PC-9 (cell line): ENCODE measurements at regions of chr17 and their contacts with region 1.

Region 1: DNA sequence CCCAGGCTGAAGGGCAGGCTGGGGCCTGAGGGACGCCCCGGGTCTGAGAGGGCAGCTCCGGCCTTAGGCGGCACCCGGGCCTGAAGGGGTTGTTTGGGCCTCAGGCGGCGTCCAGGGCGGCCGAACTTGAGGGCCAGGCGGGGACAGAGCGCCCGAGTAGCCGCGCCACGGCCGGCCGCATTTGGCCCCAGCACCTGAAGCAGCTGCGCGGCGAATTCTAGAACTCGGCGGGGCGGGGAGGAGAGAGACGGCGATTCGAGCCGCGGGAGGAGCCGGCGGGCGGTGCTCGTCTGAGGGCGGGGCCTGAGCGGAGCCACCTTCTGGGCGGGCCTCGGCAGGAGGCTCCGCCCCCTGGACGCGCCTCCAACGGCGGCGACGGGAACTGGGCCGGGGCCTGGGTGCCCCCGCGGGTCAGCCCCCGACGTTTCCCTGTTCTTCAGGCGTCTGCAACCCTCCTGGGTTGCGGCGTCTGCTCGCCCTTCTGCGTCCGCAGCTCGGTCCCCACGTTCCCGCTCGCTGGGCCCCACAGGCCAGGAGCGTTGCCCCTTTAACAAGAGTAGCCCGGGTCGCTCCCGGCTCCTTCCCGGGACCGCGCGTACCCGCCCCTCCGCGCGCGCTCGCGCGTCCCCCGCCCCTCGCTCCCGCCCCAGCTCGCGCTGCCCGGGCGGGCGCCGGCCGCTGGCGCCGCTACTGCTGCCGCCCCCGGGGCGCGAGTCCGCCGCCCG is at the starts of genes INCA1 and KIF1C:
- DNase-seq: peak; percentile 74 to 97
- H3K4me3 ChIP-seq: peak within 1 kb of the TSS; percentile 76
- H3K27ac ChIP-seq: no peak within 1 kb of the TSS
- H3K4me1 ChIP-seq: peaks cover 17% of the 10 kb centered on the region
- H3K27me3 ChIP-seq: no peaks in the 10 kb centered on the region
- CTCF ChIP-seq: no peak
- total RNA-seq, gene INCA1: 2.9 and 3.7 TPM in 2 replicates
- total RNA-seq, gene KIF1C: 215 and 217 TPM in 2 replicates

Region 2: DNA sequence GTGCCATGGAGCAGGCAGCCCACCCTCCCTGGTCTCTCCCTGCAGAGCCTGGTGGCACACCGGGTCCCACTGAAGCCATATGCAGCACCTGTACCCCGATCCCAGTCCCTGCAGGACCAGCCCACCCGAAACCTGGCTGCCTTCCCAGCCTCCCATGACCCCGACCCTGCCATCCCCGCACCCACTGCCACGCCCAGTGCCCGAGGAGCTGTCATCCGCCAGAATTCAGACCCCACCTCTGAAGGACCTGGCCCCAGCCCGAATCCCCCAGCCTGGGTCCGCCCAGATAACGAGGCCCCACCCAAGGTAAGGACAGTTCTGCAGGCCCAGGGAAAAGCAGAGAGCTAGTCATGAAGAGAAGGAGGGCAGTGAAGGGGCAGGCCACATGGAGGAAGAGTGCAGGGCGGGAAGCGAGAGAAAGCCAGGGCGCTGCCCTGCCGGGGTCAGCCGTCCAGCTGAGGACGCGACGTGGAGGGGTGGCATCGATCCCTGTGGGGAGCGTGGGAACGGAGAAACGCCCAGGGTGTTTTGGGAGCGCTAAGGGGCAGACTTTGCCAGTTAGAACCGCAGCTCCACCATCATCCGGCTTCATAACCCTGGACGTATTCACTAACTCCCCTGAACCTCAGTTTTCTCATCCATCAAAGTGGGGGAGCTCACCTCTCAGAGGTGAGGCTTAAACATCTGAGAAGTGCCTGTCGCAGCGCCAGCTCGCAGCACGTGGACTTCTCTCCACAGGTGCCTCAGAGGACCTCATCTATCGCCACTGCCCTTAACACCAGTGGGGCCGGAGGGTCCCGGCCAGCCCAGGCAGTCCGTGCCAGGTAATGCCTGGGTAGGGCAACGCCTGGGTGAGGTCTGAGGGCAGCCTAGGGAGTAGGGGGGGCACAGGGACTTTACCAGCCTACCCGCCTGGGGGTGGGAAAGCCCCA is 105.8 kb before region 1 on chr17:
- CTCF ChIA-PET with region 1: no interaction called
- POLR2A ChIA-PET with region 1: no interaction called
- intact Hi-C with region 1: no loop called
- DNase-seq: no peak
- H3K4me3 ChIP-seq: no peak overlapping the region
- H3K27ac ChIP-seq: no peak overlapping the region
- H3K4me1 ChIP-seq: no peaks in the 10 kb centered on the region
- H3K27me3 ChIP-seq: no peaks in the 10 kb centered on the region
- CTCF ChIP-seq: no peak

Region 3: DNA sequence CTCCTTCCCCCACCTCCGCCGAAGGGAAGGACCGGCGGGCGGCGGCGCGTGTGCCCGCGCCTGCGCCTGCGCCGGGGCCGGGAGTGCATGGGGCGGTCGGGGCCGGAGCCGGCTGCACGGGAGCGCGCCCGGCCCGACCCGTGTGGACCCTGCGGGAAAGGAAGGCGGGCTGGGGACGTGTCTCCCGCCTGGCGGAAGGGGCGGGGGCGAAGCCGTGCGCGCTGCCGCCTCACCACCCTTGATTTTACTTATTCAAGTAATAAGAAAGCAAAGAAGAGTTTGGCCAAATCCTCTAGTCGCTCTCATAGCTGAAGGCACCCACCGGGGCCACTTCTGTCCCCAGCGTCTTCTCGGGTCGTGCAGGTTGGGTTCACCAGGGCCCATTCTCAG is 48.5 kb before region 1 on chr17:
- CTCF ChIA-PET with region 1: no interaction called
- POLR2A ChIA-PET with region 1: no interaction called
- intact Hi-C with region 1: loop called (anchors 1 kb)
- DNase-seq: peak; percentile 71 to 92
- H3K4me3 ChIP-seq: peak overlapping the region; percentile 99
- H3K27ac ChIP-seq: peak overlapping the region; percentile 99
- H3K4me1 ChIP-seq: peaks cover 39% of the 10 kb centered on the region
- H3K27me3 ChIP-seq: no peaks in the 10 kb centered on the region
- CTCF ChIP-seq: no peak

Region 4: GRCh38 chr17:5097101-5097834 is 99.8 kb after region 1 on chr17:
- CTCF ChIA-PET with region 1: no interaction called
- POLR2A ChIA-PET with region 1: no interaction called
- intact Hi-C with region 1: no loop called
- DNase-seq: no peak
- H3K4me3 ChIP-seq: no peak overlapping the region
- H3K27ac ChIP-seq: no peak overlapping the region
- H3K4me1 ChIP-seq: no peaks in the 10 kb centered on the region
- H3K27me3 ChIP-seq: peaks cover 12% of the 10 kb centered on the region; the same call in 1 of the 2 replicates
- CTCF ChIP-seq: no peak